CD14-positive monocyte (primary cell): ENCODE measurements at regions of chr6 and their contacts with region 1.

Region 1: GRCh38 chr6:17884498-17885478 is 102.6 kb downstream of the KIF13A start:
- DNase-seq: peak; percentile 46 to 69 (median 66)
- H3K4me3 ChIP-seq: peak overlapping the region in 2 of 3 experiments; percentile 19 to 62
- H3K4me3 Mint-ChIP-seq: peak overlapping the region; percentile 54 to 84
- H3K27ac ChIP-seq: peak overlapping the region in 1 of 2 donors; percentile 82
- H3K27ac Mint-ChIP-seq: peak overlapping the region; percentile 89 to 97 (median 96)
- H3K4me1 ChIP-seq: peaks cover 56 to 70% of the 10 kb centered on the region in 2 donors
- H3K4me1 Mint-ChIP-seq: peaks cover 64% of the 10 kb centered on the region
- H3K27me3 ChIP-seq: no peaks in the 10 kb centered on the region
- H3K27me3 Mint-ChIP-seq: no peaks in the 10 kb centered on the region
- CTCF ChIP-seq: no peak

Region 2: GRCh38 chr6:17705428-17705777 is 179.4 kb before region 1 on chr6:
- intact Hi-C with region 1: no loop called
- DNase-seq: no peak
- H3K4me3 ChIP-seq: peak overlapping the region; percentile 66 to 93 (median 87)
- H3K4me3 Mint-ChIP-seq: peak overlapping the region; percentile 88 to 96
- H3K27ac ChIP-seq: peak overlapping the region; percentile 96
- H3K27ac Mint-ChIP-seq: peak overlapping the region; percentile 94 to 98 (median 97)
- H3K4me1 ChIP-seq: peaks cover 60 to 63% of the 10 kb centered on the region in 2 donors
- H3K4me1 Mint-ChIP-seq: peaks cover 49% of the 10 kb centered on the region
- H3K27me3 ChIP-seq: no peaks in the 10 kb centered on the region
- H3K27me3 Mint-ChIP-seq: peaks cover 0 to 2% (median 0%) of the 10 kb centered on the region in 3 donors
- CTCF ChIP-seq: no peak

Region 3: DNA sequence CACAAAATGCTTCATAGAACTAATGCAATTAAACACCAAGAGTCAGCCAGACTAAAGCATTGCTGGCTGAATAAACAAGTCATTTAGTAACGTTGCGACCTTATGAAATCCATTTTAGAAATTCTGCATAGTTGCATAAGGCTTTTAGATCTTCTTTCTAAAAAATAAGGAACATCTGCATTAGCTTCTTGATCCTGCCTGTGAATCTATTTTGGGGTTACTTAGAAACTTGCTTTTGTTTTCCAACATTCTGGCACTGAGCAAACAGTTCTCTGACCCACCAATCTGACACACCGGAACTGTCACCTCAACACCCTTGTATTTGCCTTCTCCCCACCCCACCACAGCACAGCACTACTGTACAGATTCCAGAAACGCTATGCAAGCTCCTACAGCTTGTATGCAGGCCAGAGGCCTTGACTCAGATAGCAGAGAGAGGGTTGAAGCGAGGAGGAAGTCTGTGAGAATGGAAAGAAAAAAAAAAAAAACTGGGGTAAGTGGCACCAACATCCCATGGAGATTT is 47.6 kb after region 1 on chr6:
- intact Hi-C with region 1: loop called in 1 of 2 experiments (anchors 10 kb)
- DNase-seq: peak; percentile 75 to 87 (median 80)
- H3K4me3 ChIP-seq: peak overlapping the region in 1 of 3 experiments; percentile 52
- H3K4me3 Mint-ChIP-seq: peak overlapping the region; percentile 69 to 88
- H3K27ac ChIP-seq: peak overlapping the region; percentile 87 to 90
- H3K27ac Mint-ChIP-seq: peak overlapping the region; percentile 90 to 98 (median 97)
- H3K4me1 ChIP-seq: peaks cover 65 to 70% of the 10 kb centered on the region in 2 donors
- H3K4me1 Mint-ChIP-seq: peaks cover 75% of the 10 kb centered on the region
- H3K27me3 ChIP-seq: no peaks in the 10 kb centered on the region
- H3K27me3 Mint-ChIP-seq: peaks cover 0 to 2% (median 0%) of the 10 kb centered on the region in 3 donors
- CTCF ChIP-seq: no peak

Region 4: DNA sequence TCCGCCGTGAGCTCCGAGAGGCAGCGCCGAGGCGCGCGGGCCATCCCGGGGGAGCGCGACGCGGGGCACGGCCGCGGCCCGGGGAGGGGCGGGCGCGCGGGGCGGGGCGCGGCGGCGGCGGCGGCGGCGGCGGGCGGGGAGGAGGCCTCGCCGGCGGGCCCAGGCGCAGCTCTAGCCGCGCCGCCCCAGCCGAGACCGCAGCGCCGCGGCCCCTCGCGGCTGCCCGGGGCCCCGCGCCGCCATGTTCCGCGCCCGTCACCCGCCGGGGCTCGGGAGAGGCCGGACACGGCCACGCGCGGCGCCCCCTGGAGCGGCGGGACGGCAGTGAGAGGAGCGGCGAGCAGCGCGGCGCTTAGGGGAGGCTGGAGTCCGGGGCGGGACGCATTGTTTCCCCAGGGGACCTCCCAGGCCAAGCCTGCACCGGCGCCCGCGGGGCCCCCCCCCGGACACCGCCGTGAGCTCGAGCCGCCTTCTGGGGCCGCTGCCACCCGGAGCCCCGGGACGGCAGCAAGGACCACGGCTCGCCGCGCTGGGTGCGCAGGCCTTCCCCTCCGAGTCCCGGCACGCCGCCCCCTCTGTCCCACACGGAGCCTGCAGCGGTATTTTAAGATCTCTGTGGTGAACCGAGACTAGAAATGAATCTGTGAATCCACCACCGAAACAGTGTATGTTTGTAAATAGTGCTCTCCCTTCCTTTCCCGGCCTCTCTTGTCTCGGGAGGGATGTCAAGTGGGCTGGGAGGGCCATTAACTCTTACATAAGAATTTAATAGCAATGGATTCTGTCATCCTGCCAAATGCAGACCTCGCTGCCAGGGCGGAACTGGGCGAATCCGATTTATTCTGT is 103.0 kb after region 1 on chr6 and contains the start of gene KIF13A:
- intact Hi-C with region 1: loop called in 1 of 2 experiments (anchors 10 kb)
- DNase-seq: peak; percentile 43 to 62 (median 60)
- H3K4me3 ChIP-seq: peak within 1 kb of the TSS; percentile 69 to 99 (median 92)
- H3K4me3 Mint-ChIP-seq: peak within 1 kb of the TSS; percentile 94 to 99
- H3K27ac ChIP-seq: peak within 1 kb of the TSS; percentile 91 to 95
- H3K27ac Mint-ChIP-seq: peak within 1 kb of the TSS; percentile 90 to 99 (median 97)
- H3K4me1 ChIP-seq: peaks cover 52 to 55% of the 10 kb centered on the region in 2 donors
- H3K4me1 Mint-ChIP-seq: peaks cover 51% of the 10 kb centered on the region
- H3K27me3 ChIP-seq: no peaks in the 10 kb centered on the region
- H3K27me3 Mint-ChIP-seq: peaks cover 0 to 4% (median 4%) of the 10 kb centered on the region in 3 donors
- CTCF ChIP-seq: peak; percentile 29
- polyA plus RNA-seq, gene KIF13A: 2.9 to 28.4 (median 6.0) TPM